ENCODE measurements at regions of chr6 and their contacts with region 1.

Region 1: DNA sequence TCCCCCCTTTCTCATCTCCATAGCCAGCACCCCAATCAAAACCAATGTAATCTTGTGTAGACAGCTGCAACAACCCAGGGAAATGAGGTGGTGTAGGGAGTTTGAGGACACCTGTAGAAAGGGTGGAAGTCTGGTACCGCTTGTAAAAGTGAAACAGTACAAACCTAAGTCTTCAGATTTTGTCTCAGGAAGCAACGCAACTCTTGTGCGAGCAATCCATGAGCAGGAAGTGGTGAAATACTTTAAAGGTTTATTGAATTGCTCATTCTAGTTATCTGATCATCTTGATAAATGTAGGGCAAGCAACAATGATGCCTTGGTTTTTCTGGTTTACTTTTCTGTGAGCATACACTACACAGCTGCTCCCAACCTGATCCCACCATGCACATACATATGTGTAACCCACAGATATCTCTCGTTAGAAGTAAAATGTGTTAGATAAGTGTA is 71.1 kb upstream of the THEMIS start:
- DNase-seq: peak; percentile 46 to 76
- H3K4me3 ChIP-seq: no peak overlapping the region
- H3K27ac ChIP-seq: 0 out of 2 replicates have a peak overlapping the region, but pooled peaks have one; percentile 9
- H3K4me1 ChIP-seq: peaks cover 11% of the 10 kb centered on the region
- H3K27me3 ChIP-seq: no peaks in the 10 kb centered on the region
- CTCF ChIP-seq: no peak

Region 2: DNA sequence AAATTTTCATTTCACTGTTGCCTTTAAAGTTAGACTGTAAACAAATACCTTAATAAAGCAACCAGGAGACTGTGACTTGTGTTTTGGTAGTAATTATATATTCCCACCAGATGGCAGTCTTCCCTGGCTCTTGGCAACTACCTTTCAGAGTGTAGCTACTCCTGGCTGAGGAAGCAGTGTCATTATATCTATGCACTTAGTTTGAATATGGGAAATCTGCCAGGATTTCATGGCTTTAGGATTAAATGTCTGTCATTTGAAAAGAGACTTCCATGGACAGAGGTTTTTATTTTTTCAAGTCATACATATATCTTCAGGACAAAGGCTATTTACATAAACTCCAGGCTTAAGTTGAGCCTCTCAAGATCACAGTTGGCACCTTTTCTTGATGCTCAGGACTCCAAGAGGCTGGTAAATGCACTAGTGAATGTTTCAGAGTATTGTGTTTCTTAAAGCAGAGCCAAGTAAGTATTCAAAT is 234.9 kb before region 1 on chr6:
- CTCF ChIA-PET with region 1: no interaction called
- POLR2A ChIA-PET with region 1: no interaction called
- intact Hi-C with region 1: loop called (anchors 5 kb)
- DNase-seq: peak; percentile 40 to 56
- H3K4me3 ChIP-seq: no peak overlapping the region
- H3K27ac ChIP-seq: no peak overlapping the region
- H3K4me1 ChIP-seq: no peaks in the 10 kb centered on the region
- H3K27me3 ChIP-seq: no peaks in the 10 kb centered on the region
- CTCF ChIP-seq: peak; percentile 92

Region 3: DNA sequence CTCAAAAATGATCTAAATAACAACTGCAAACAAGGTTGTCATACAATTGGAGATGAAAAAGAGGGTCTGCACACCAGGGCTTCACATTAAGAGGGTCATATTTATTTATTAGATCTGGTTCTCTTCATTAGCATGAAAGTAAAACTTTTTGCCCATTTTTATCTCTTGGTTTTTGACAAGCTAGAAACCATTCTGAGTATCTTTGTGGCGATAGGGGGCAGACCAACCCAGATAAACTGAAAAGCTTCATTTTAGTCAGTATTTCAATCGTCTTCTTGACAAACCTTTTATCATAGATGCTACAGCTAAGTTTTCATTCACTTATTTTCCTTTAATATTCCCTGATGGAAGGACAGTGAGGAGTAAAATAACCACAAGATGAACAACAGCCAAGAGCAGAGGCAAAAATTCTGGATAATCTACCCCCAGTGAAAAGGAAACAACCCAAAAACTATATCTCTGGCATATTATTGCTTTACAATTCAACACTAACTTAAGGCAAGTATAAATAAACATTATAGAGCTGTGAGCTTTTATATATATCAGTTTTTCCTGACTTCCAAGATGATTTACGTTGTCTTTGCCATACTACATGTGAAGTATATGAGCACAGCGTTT is 116.3 kb before region 1 on chr6:
- CTCF ChIA-PET with region 1: no interaction called
- POLR2A ChIA-PET with region 1: no interaction called
- intact Hi-C with region 1: loop called (anchors 5 kb)
- DNase-seq: peak in 1 of 2 experiments; percentile 6
- H3K4me3 ChIP-seq: no peak overlapping the region
- H3K27ac ChIP-seq: no peak overlapping the region
- H3K4me1 ChIP-seq: no peaks in the 10 kb centered on the region
- H3K27me3 ChIP-seq: no peaks in the 10 kb centered on the region
- CTCF ChIP-seq: peak; percentile 65

Region 4: GRCh38 chr6:127879685-127880084 is 92.3 kb before region 1 on chr6:
- CTCF ChIA-PET with region 1: no interaction called
- POLR2A ChIA-PET with region 1: no interaction called
- intact Hi-C with region 1: loop called (anchors 5 kb)
- DNase-seq: no peak
- H3K4me3 ChIP-seq: no peak overlapping the region
- H3K27ac ChIP-seq: no peak overlapping the region
- H3K4me1 ChIP-seq: peaks cover 8% of the 10 kb centered on the region; the same call in 1 of the 2 replicates
- H3K27me3 ChIP-seq: no peaks in the 10 kb centered on the region
- CTCF ChIP-seq: no peak

Region 5: GRCh38 chr6:127956260-127956874 is 15.6 kb before region 1 on chr6:
- CTCF ChIA-PET with region 1: no interaction called
- POLR2A ChIA-PET with region 1: interaction called, 10 read pairs
- intact Hi-C with region 1: no loop called
- DNase-seq: no peak
- H3K4me3 ChIP-seq: no peak overlapping the region
- H3K27ac ChIP-seq: no peak overlapping the region
- H3K4me1 ChIP-seq: no peaks in the 10 kb centered on the region
- H3K27me3 ChIP-seq: no peaks in the 10 kb centered on the region
- CTCF ChIP-seq: no peak; the same call in 1 of the 2 replicates

Region 6: DNA sequence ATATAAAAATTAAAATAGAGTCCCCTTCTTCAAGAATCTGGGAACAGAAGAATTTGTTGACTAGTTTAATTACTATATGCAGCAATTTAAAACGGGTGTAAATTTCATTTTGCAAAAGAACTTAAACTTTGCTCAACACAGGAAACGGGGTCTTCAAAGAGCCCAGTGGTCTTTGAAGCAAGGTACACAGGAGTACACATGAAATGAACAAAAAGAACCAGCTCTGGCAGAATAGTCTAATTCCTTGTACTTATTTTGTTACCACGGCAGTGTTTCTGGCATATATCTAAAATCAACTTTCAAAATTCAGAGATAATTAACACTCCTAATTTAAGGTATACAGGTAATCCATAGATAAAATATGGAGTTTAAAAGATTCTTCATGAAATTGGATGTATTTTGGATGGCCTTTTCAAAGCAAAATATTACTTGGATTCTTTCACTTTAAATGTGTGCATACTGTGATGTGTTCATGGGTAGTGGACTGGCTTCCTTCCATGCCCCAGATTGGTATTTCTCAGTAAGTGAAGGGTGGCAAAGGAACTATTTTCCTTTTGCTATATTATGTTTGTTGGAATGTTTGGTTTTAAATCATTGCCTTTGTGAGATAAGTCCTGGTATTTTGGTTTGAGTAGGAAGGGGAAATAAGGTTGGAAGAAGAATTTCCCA is 25.7 kb after region 1 on chr6:
- CTCF ChIA-PET with region 1: no interaction called
- POLR2A ChIA-PET with region 1: no interaction called
- intact Hi-C with region 1: no loop called
- DNase-seq: no peak
- H3K4me3 ChIP-seq: no peak overlapping the region
- H3K27ac ChIP-seq: no peak overlapping the region
- H3K4me1 ChIP-seq: no peaks in the 10 kb centered on the region
- H3K27me3 ChIP-seq: no peaks in the 10 kb centered on the region
- CTCF ChIP-seq: no peak